AG04450 (cell line): ENCODE measurements at regions of chr2 and their contacts with region 1.

Region 1: GRCh38 chr2:47076586-47077441 is 78.3 kb downstream of the STPG4 start:
- DNase-seq: peak; percentile 87
- H3K4me3 ChIP-seq: no peak overlapping the region
- H3K27ac ChIP-seq: peak overlapping the region; percentile 97
- H3K27me3 ChIP-seq: no peaks in the 10 kb centered on the region
- CTCF ChIP-seq: no peak

Region 2: GRCh38 chr2:46657042-46657504 is 419.7 kb before region 1 on chr2:
- CTCF ChIA-PET with region 1: no interaction called
- POLR2A ChIA-PET with region 1: no interaction called
- DNase-seq: no peak
- H3K4me3 ChIP-seq: no peak overlapping the region
- H3K27ac ChIP-seq: no peak overlapping the region
- H3K27me3 ChIP-seq: no peaks in the 10 kb centered on the region
- CTCF ChIP-seq: peak; percentile 41; the same call in 1 of the 2 replicates

Region 3: GRCh38 chr2:46836295-46837111 is 240.3 kb before region 1 on chr2:
- CTCF ChIA-PET with region 1: no interaction called
- POLR2A ChIA-PET with region 1: no interaction called
- DNase-seq: no peak
- H3K4me3 ChIP-seq: no peak overlapping the region
- H3K27ac ChIP-seq: peak overlapping the region; percentile 21
- H3K27me3 ChIP-seq: no peaks in the 10 kb centered on the region
- CTCF ChIP-seq: no peak

Region 4: DNA sequence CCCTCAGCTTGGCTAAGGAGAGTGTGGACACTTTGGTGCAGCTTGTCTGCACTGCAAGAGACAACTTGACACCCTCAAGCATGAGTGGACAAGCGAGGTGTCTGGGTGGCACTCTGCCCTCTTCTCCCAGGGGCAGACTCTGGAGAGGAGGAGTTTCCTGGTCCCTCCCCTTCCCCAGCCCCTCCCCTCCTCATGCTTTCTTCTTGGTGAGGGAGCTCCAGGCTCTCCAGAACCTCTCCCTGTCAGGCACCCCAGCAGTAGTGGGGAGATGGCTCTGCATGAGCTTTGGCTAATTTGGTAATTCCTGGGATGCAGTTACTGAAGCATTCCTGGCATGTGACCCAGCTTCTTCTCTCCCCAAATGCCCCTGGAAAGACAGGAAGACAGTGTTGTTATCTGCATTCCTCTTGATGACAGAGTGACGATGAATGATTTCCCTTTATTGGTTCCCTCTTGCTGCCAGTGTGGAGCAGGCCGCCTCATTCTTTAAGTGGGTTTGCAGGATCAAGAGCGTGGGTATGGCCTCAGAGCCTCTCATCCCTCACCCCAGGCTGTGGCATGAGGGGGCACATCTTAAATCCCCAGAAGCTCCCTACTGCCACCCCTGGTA is 10.9 kb before region 1 on chr2:
- CTCF ChIA-PET with region 1: interaction called, 6 read pairs
- POLR2A ChIA-PET with region 1: interaction called, 13 read pairs
- DNase-seq: peak; percentile 65
- H3K4me3 ChIP-seq: no peak overlapping the region
- H3K27ac ChIP-seq: peak overlapping the region; percentile 65
- H3K27me3 ChIP-seq: no peaks in the 10 kb centered on the region
- CTCF ChIP-seq: no peak

Region 5: DNA sequence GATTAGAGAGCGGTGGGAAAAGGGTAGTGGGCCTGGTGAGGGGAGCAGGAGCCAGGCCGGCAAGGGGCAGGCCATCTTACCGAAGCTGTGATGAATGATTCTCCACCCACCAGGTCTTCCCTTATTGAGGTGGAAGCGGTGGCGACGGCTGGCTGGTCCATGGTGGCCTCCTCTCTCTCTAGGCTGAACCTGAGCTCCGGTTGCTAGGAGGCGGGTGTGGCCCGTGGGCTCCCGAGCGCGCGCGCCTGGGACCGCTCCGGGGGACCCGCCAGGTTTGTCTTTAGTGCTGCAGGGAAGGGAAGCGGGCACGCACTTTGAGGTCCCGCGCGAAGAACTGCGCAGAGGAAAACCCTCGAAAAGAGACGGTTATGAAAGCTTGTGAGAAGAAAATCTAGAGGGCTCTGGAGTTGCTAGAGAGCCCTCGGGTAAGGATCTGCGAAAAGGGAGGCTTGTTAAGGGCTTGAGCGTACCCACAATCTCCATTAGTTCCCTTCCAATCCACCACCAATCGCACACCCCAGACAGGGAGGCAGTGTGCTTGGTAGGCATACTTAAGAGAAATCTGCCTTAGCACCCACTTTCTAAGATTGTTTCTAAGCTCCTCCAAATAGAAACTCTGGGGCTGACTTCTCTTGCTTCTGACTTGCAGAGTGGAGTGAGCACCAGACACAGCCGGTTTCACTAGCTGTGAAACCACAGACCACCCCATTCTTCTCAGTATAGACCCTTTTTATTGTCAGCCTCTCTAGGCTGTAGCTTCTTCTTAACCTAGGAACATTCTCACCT is 78.5 kb after region 1 on chr2 and contains the start of gene STPG4:
- CTCF ChIA-PET with region 1: no interaction called
- POLR2A ChIA-PET with region 1: no interaction called
- DNase-seq: no peak
- H3K4me3 ChIP-seq: no peak within 1 kb of the TSS
- H3K27ac ChIP-seq: no peak within 1 kb of the TSS
- H3K27me3 ChIP-seq: no peaks in the 10 kb centered on the region
- CTCF ChIP-seq: no peak
- polyA plus RNA-seq, gene STPG4: 0.05 and 0.14 TPM in 2 replicates

Region 6: DNA sequence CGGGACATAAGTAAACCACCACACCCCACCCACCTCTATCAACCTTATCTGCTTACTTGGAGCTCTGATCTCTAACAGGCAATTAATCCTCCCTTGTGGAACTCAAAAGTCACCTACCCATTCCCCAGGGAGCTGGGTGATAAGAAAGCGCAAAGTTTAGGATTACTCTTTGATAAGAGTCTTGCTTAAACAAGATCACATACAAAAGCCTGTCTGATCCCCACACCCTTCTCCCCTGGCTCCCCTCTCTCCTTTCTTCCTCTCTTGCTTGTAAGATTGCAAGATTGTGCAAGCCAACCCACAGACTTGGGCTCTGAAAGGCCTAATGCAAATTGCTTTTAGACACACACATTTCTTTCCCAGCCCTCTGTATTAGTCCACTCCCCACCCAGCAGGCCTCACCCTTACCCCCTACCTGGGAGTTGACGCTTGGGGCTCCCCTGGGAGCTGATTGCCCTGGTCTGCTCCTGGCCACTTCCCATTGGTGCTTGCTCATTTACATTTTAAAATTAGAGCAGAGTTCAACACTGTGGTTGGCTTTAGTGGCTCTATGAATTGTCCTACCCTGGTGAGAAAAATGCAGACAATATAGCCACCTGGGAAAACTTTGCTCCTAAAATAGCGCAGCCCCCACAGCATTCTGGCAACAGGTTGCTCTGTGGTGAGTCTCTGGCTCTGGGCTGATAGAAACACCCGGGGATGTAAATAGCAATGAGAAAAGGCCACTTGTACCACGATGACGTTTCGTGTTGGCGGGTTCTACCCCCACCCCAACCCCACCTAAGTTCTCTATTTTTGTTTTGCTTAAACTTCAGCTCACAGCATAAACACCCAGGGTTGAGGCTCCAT is 233.4 kb after region 1 on chr2:
- CTCF ChIA-PET with region 1: no interaction called
- POLR2A ChIA-PET with region 1: interaction called, 11 read pairs
- DNase-seq: no peak
- H3K4me3 ChIP-seq: no peak overlapping the region
- H3K27ac ChIP-seq: no peak overlapping the region
- H3K27me3 ChIP-seq: no peaks in the 10 kb centered on the region
- CTCF ChIP-seq: no peak